ENCODE measurements at regions of chr4 and their contacts with region 1.

Region 1: DNA sequence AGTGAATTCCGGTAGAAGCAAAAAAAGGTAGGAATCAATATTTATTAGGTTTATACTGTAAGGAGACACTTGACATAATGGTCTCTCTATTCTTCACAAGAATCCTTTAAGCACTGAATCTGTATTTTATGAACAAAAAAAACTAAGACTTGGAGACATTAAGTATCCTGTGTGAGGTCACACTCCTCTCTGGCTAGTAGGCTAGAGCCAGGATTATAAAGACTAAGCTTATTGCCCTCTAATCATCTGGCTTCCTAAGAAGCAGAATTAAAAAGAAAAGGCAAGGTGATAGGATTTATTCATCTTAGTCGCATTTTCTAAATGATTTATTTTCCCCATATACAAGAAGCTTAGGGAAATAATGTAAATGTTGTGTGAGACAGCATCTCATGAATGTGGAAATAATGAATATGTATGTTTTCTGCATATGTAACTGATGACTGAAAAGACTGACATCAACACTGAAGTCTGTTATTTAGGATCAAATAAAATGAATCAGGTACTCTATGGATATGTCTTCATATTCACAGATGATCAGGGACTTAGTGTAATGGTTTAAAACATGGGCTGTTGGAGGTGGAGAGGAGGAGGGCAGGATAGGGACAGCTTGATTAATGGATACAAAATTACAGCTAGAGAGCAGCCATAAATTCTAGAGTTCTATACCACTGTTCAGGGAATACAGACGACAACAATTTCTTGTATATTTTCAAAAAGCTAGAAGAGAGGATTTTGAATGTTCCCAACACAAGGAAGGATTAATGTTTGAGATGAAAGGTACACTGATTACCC is 30.4 kb upstream of the PRKG2 start:
- DNase-seq: no peak
- ATAC-seq: no peak
- H3K4me3 ChIP-seq: no peak overlapping the region
- H3K4me3 Mint-ChIP-seq: no peak overlapping the region
- H3K27ac ChIP-seq: no peak overlapping the region
- H3K27ac Mint-ChIP-seq: no peak overlapping the region
- H3K4me1 ChIP-seq: no peaks in the 10 kb centered on the region
- H3K4me1 Mint-ChIP-seq: no peaks in the 10 kb centered on the region
- H3K27me3 ChIP-seq: no peaks in the 10 kb centered on the region
- H3K27me3 Mint-ChIP-seq: peaks cover 4% of the 10 kb centered on the region
- CTCF ChIP-seq: no peak

Region 2: GRCh38 chr4:81220271-81220670 is 25.1 kb before region 1 on chr4:
- CTCF ChIA-PET with region 1: no interaction called
- POLR2A ChIA-PET with region 1: no interaction called
- intact Hi-C with region 1: loop called (anchors 1 kb)
- DNase-seq: no peak
- ATAC-seq: no peak
- H3K4me3 ChIP-seq: no peak overlapping the region
- H3K4me3 Mint-ChIP-seq: no peak overlapping the region
- H3K27ac ChIP-seq: no peak overlapping the region
- H3K27ac Mint-ChIP-seq: no peak overlapping the region
- H3K4me1 ChIP-seq: peaks cover 4% of the 10 kb centered on the region in 2 donors
- H3K4me1 Mint-ChIP-seq: peaks cover 6% of the 10 kb centered on the region
- H3K27me3 ChIP-seq: peaks cover 0 to 24% (median 5%) of the 10 kb centered on the region in 4 experiments
- H3K27me3 Mint-ChIP-seq: peaks cover 40% of the 10 kb centered on the region
- CTCF ChIP-seq: no peak

Region 3: DNA sequence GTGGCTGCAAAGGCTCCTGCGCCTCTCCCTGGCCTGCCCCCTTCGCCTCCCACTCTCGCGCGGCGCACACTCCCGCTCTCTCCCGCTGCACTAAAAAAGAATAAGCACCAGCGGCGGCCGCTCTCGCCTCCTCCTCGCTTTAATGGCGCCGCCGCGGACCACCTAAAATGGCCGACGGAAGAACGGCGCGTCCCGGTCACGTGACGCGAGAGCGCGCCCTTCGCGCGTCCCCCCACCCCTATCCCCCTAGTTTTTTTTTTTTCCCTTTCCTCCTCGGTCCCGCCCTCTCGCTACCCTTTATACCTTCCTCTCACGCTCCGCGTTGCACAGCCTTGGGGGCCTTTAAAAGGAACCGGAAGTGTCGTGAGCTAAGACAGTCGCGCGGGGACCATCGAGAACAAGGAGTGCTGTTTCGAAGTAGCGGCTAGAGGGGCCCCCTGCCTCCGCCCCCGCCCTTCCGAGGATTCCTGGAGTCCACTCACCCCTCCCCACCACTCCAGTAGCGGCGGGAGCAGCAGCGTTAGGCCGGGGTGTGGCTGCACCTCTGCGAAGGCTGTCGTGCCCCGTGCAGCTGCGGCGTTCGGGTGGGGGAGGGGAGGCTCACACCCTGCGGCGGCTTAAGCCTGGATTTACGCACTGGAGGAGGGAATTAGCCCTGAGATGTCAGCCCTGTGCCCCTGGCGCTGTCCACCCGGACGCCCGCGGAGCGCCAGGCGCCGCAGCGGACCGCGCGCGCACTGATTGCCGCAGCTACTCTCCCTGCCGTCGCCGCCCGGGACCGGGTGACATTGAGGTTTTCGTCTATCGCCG is 1128.6 kb after region 1 on chr4 and contains the start of gene HNRNPD:
- CTCF ChIA-PET with region 1: no interaction called
- POLR2A ChIA-PET with region 1: no interaction called
- intact Hi-C with region 1: no loop called
- DNase-seq: peak; percentile 98
- ATAC-seq: peak; percentile 86
- H3K4me3 ChIP-seq: peak within 1 kb of the TSS; percentile 89 to 98 (median 95)
- H3K4me3 Mint-ChIP-seq: peak within 1 kb of the TSS; percentile 93
- H3K27ac ChIP-seq: peak within 1 kb of the TSS; percentile 98
- H3K27ac Mint-ChIP-seq: peak within 1 kb of the TSS; percentile 98
- H3K4me1 ChIP-seq: peaks cover 38% of the 10 kb centered on the region in 2 donors
- H3K4me1 Mint-ChIP-seq: peaks cover 51% of the 10 kb centered on the region
- H3K27me3 ChIP-seq: no peaks in the 10 kb centered on the region
- H3K27me3 Mint-ChIP-seq: no peaks in the 10 kb centered on the region
- CTCF ChIP-seq: no peak
- total RNA-seq, gene HNRNPD: 266 and 280 TPM in 2 replicates